ENCODE measurements at regions of chr1 and their contacts with region 1.

Region 1: DNA sequence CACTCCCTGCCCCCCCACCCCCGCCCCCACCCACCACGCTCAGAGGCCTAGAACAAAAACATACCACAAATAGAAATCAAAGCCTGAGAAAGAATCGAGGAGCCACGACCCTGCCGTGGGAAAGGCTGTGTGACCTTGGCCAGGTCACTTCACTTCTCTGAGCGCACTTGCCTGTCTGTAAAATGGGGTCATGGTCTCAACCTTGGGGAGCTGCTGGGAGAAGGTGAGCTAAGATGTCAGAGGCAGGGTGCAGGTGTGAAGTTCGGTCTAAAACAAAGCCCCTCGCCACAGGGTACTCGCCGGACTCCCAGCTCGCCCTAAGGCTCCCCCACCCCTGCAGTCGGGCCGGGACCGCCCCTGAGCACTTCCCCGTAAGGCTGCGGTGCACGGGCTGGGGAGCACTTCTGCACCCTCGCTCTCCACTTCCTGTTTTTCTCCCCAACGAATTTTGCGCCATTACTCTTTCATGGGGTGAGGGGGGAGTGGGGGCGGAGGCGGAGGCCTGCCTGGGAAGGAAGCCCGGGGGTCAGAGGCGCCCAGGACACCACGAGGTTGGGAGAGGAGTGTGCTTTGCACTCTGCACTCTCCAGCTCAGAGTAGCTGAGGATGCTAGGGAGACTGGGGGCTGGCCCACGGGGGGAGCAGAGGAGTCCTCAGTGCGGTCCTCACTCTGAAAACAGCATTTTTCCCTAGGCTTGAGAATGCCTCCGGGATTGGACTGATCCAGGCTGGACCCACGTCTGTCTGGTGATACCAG is 21.9 kb upstream of the PIK3CD start:
- DNase-seq: peak in 3 of 4 donors; percentile 24 to 95 (median 85)
- ATAC-seq: peak; percentile 45
- H3K4me3 ChIP-seq: peak overlapping the region in 1 of 2 donors; percentile 31
- H3K27ac ChIP-seq: peak overlapping the region; percentile 13 to 77
- H3K4me1 ChIP-seq: peaks cover 0 to 61% of the 10 kb centered on the region in 2 donors
- H3K27me3 ChIP-seq: peaks cover 0 to 30% of the 10 kb centered on the region in 2 donors
- CTCF ChIP-seq: no peak

Region 2: GRCh38 chr1:9388335-9389180 is 241.1 kb before region 1 on chr1:
- intact Hi-C with region 1: no loop called
- DNase-seq: no peak
- ATAC-seq: no peak
- H3K4me3 ChIP-seq: no peak overlapping the region
- H3K27ac ChIP-seq: no peak overlapping the region
- H3K4me1 ChIP-seq: no peaks in the 10 kb centered on the region
- H3K27me3 ChIP-seq: no peaks in the 10 kb centered on the region
- CTCF ChIP-seq: no peak

Region 3: DNA sequence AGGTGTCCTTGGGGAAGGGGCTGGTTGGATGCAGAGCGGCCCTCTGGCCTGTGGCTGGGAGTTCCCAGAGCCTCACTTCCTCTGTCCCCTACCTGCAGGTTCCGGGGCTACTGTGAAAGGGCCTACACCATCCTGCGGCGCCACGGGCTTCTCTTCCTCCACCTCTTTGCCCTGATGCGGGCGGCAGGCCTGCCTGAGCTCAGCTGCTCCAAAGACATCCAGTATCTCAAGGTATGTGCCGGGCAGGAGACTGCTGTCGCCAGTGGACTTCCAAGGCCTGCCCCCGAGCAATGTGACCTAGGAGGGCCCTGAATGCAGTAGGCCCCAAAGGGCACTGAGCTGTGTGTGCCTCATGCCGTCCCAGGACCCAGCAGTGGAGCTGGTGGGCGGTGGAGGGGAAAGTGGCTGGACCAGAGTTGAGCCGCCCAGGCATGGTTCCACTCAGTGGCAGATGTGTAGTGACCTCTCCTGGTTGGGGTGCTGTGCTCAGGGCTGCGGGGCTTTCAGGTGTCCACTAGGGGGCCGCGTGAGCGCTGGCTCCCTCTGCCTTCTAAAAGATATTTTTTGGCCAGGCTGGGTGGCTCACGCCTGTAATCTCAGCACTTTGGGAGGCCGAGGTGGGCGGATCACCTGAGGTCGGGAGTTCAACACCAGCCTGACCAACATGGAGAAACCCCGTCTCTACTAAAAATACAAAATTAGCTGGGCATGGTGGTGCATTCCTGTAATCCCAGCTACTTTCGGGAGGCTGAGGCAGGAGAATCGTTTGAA is 95.3 kb after region 1 on chr1:
- intact Hi-C with region 1: loop called in 1 of 2 experiments (anchors 10 kb)
- DNase-seq: peak in 2 of 4 donors; percentile 22 to 91
- ATAC-seq: peak; percentile 89
- H3K4me3 ChIP-seq: no peak overlapping the region
- H3K27ac ChIP-seq: no peak overlapping the region
- H3K4me1 ChIP-seq: no peaks in the 10 kb centered on the region
- H3K27me3 ChIP-seq: no peaks in the 10 kb centered on the region
- CTCF ChIP-seq: peak; percentile 75 to 94

Measured in left lung (tissue), 14 donors.